H1 (cell line): ENCODE measurements at regions of chr3 and their contacts with region 1.

Region 1: DNA sequence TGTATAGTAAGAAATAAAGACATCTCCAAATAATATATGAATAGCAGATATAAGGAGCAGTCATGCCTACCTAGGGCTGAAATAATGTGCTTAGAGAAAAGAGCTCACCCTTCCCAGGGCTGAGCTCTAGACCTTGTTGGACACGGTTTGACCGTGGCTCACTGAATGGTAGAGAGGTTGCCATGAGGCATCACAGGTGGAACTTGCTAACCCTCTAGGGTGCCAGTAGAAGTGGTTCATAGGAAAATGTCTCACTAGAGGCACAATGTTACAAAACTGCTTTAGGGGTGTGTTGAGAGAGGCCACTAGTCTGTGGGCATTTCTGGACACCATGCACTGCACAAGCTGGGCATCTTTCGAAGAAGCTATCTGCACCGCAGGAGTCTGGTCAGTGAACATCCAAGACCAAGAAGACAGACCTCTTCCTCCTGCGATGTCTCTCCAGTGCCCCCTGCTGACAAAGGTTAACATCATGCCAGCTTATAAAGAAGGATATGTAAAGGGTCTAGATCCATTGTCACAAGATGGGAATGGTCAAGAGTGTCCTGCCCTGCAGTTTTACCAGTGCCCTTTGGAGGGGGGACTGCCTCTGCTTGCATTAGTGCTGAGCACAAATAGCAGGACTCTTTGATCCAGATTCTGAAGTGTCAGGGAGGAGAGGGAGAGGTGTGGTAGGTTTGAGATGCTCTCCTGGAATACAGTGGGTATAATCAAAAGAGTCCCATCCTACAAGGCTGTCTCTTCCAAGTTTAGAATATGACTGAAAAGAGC is 266.8 kb downstream of the ZNF385D start:
- DNase-seq: peak; percentile 25 to 77
- H3K4me3 ChIP-seq: no peak overlapping the region
- H3K27ac ChIP-seq: no peak overlapping the region
- H3K4me1 ChIP-seq: no peaks in the 10 kb centered on the region
- H3K27me3 ChIP-seq: no peaks in the 10 kb centered on the region
- CTCF ChIP-seq: peak; percentile 21 to 80 (median 67)
- EP300 ChIP-seq: no peak
- POLR2A ChIP-seq: no peak
- RAD21 ChIP-seq: peak; percentile 82 to 84

Region 2: GRCh38 chr3:21502656-21503055 is 18.4 kb after region 1 on chr3:
- CTCF ChIA-PET with region 1: interaction called, 13 read pairs
- POLR2A ChIA-PET with region 1: no interaction called
- DNase-seq: no peak
- H3K4me3 ChIP-seq: no peak overlapping the region
- H3K27ac ChIP-seq: no peak overlapping the region
- H3K4me1 ChIP-seq: peaks cover 0 to 7% (median 2%) of the 10 kb centered on the region in 4 experiments; a peak in 3 of 7 replicates
- H3K27me3 ChIP-seq: no peaks in the 10 kb centered on the region
- CTCF ChIP-seq: no peak
- EP300 ChIP-seq: no peak
- POLR2A ChIP-seq: no peak
- RAD21 ChIP-seq: no peak

Region 3: DNA sequence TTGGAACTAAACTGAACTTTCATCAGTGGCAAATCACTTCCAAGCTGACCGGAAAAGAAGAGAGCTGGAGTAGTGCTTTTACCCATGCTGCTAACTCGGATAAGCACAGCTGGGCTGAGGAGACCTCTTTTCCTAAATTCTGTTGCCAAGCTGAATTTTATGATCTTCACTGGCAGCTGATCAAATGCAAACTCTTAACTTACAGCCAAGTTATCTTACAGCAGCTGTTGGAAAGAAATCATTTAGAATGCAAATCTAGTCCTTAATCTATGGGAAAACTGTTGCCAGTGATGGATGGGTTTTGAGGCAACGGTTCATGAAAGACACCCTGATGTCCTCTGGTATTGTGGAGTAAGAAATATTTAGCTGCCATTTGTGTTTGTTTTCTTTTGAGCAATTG is 50.2 kb after region 1 on chr3:
- CTCF ChIA-PET with region 1: no interaction called
- POLR2A ChIA-PET with region 1: no interaction called
- DNase-seq: no peak
- H3K4me3 ChIP-seq: no peak overlapping the region
- H3K27ac ChIP-seq: no peak overlapping the region
- H3K4me1 ChIP-seq: no peaks in the 10 kb centered on the region
- H3K27me3 ChIP-seq: no peaks in the 10 kb centered on the region
- CTCF ChIP-seq: no peak
- EP300 ChIP-seq: no peak
- POLR2A ChIP-seq: no peak
- RAD21 ChIP-seq: no peak